ENCODE measurements at regions of chr6 and their contacts with region 1.

Region 1: GRCh38 chr6:125749173-125749864 is at the start of gene HEY2:
- DNase-seq: peak; percentile 63 to 92 (median 69)
- ATAC-seq: peak; percentile 93
- H3K4me3 ChIP-seq: peak within 1 kb of the TSS; percentile 72
- H3K4me3 Mint-ChIP-seq: peak within 1 kb of the TSS; percentile 86 to 99 (median 93)
- H3K27ac ChIP-seq: peak within 1 kb of the TSS; percentile 45
- H3K27ac Mint-ChIP-seq: peak within 1 kb of the TSS in 8 of 9 donors; percentile 41 to 94 (median 68)
- H3K4me1 ChIP-seq: peaks cover 24 to 34% of the 10 kb centered on the region in 2 donors
- H3K4me1 Mint-ChIP-seq: peaks cover 26 to 50% (median 35%) of the 10 kb centered on the region in 7 donors
- H3K27me3 ChIP-seq: peaks cover 14 to 19% of the 10 kb centered on the region in 2 donors
- H3K27me3 Mint-ChIP-seq: peaks cover 19 to 82% (median 55%) of the 10 kb centered on the region in 5 donors
- total RNA-seq, gene HEY2: 0.34 to 0.46 (median 0.46) TPM in 3 of 5 experiments, not detected in the others

Region 2: DNA sequence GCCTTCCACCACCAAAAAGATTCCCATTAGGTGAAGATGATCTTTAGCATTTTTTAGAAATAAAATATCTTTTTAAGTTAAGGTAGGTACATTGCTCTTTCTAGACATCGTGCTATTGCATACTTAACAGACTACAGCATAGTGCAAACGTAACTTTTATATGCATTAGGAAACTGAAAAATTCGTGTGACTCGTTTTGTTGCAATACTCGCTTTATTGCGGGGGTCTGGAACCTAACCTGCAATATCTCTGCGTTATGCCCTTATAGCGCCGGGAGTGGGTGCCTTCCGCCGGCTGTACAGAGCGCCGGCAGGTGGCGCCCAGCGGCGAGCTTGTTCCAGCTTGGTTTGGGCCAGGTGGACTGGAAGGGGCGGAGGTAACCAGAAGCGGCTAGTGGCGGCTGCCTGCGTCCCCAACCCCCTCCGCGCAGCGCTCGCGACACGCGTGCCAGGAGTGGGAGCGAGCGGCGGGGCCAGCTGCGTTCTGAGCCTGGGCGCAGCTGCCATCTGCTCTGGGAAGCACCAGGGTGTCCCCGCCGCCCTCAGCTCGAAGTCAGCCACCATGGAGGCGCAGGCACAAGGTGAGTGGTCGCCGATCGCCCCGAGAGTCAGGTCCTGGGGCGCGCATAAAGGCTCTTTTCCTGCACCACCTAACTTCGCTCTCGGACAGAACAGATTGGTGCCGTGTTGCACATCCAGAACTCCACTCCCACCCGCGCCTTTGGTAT is 595.8 kb before region 1 on chr6 and contains the start of gene TPD52L1:
- CTCF ChIA-PET with region 1: no interaction called
- POLR2A ChIA-PET with region 1: no interaction called
- intact Hi-C with region 1: loop called in 1 of 2 experiments (anchors 5 kb)
- DNase-seq: peak; percentile 23 to 68 (median 35)
- ATAC-seq: peak; percentile 87
- H3K4me3 ChIP-seq: peak within 1 kb of the TSS; percentile 55
- H3K4me3 Mint-ChIP-seq: peak within 1 kb of the TSS; percentile 72 to 87 (median 78)
- H3K27ac ChIP-seq: no peak within 1 kb of the TSS
- H3K27ac Mint-ChIP-seq: no peak within 1 kb of the TSS
- H3K4me1 ChIP-seq: peaks cover 0 to 5% of the 10 kb centered on the region in 2 donors
- H3K4me1 Mint-ChIP-seq: peaks cover 0 to 14% (median 10%) of the 10 kb centered on the region in 7 donors
- H3K27me3 ChIP-seq: peaks cover 0 to 4% of the 10 kb centered on the region in 2 donors
- H3K27me3 Mint-ChIP-seq: peaks cover 24 to 54% (median 45%) of the 10 kb centered on the region in 5 donors
- total RNA-seq, gene TPD52L1: 0.15 TPM in 1 of 5 experiments, not detected in the others

Region 3: DNA sequence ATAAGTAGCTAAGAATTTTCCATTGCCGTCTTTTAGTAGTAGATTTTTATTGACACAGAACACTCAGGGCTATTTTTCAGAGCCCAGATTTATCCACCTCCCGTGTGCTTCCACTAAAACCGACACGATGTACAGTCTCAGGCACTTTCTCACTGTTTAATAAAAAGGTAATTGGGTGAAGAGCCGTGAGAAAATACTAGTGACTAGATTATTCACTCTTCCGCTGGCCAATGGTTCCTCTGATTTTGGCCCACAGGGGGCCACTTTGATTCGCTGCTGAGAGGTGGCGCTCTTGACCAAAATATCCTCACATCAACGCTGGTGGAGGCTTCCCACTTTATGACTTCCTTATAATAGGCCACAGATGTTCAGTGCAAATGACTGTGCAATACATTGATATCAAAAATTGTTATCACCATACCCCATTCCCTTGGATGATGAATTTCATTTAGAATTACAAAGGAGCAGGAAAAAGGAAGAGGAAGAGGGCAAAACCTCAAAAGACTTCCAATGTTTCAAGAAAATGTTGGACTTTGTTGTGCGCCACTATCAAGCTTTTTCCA is 435.2 kb before region 1 on chr6:
- CTCF ChIA-PET with region 1: interaction called, 23 read pairs
- POLR2A ChIA-PET with region 1: interaction called, 3 read pairs
- intact Hi-C with region 1: loop called (anchors 1 kb)
- DNase-seq: peak in 3 of 9 donors; percentile 17 to 27 (median 22)
- ATAC-seq: peak; percentile 76
- H3K4me3 ChIP-seq: no peak overlapping the region
- H3K4me3 Mint-ChIP-seq: no peak overlapping the region
- H3K27ac ChIP-seq: no peak overlapping the region
- H3K27ac Mint-ChIP-seq: no peak overlapping the region
- H3K4me1 ChIP-seq: no peaks in the 10 kb centered on the region
- H3K4me1 Mint-ChIP-seq: peaks cover 0 to 2% (median 0%) of the 10 kb centered on the region in 7 donors
- H3K27me3 ChIP-seq: peaks cover 0 to 6% of the 10 kb centered on the region in 2 donors
- H3K27me3 Mint-ChIP-seq: peaks cover 0 to 22% (median 4%) of the 10 kb centered on the region in 5 donors

Region 4: DNA sequence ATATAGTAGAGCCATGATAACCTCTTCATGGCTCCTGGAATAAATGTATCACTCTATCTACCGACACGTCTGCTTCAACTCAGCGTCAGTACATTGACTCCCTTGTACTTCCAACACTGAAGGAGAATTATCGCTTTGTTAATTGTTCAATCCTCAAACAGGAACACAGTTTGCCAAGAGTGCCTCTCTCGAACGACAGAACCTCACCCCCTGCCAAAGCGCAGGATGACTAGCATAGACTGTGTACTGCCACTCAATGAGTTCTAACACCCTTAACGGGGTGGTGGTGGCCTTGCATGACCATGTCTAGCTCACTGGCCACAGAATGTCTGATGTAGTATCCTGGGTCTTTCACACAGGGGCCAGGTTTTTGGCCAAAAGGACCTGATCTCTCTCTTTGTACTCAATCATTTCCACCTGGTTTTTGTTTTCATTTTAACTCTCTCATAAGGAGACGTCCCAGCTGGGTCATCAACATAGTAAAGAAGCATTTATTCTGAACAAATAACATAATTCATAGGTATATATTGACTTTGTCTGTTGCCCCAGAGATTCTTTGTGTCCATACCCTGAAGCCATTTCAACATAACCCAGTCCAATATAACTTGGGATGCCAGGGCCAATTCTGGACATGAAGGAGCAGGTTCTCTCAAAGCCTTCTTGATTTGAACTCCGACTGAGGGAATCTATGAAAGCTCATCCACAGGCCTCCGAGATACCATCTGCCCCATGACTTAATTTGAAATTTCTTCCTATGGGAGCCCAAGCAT is 81.1 kb before region 1 on chr6:
- CTCF ChIA-PET with region 1: no interaction called
- POLR2A ChIA-PET with region 1: no interaction called
- intact Hi-C with region 1: no loop called
- DNase-seq: no peak
- ATAC-seq: no peak
- H3K4me3 ChIP-seq: no peak overlapping the region
- H3K4me3 Mint-ChIP-seq: no peak overlapping the region
- H3K27ac ChIP-seq: no peak overlapping the region
- H3K27ac Mint-ChIP-seq: no peak overlapping the region
- H3K4me1 ChIP-seq: no peaks in the 10 kb centered on the region
- H3K4me1 Mint-ChIP-seq: no peaks in the 10 kb centered on the region
- H3K27me3 ChIP-seq: no peaks in the 10 kb centered on the region
- H3K27me3 Mint-ChIP-seq: peaks cover 4 to 17% (median 14%) of the 10 kb centered on the region in 5 donors

Region 5: DNA sequence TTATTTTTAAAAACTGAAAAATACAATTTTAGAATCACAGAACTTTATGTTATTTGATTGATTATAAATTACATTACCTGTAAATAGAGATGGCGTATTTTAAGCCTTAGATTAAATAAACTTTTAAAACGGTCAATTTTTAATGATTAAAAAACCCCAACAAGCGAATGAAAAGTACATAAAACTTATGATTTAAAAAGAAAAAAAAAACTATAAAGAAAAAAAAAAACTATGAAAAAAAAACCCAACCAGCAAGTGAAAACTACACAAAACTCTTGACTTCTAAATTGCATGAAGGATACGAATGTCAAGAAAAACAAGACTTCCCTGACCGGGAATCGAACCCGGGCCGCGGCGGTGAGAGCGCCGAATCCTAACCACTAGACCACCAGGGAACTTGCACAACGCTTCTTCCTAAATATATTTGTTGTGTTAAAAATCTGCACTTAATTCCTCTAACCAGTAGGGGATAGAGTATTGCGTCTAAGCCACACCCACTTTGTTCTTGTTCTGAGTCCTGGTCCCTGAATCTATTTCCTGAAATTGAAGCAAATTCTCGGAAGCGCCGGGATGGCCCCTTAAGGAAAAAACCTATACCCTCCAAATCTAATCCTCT is 30.7 kb after region 1 on chr6:
- CTCF ChIA-PET with region 1: interaction called, 6 read pairs
- POLR2A ChIA-PET with region 1: interaction called, 12 read pairs
- intact Hi-C with region 1: loop called (anchors 1 kb)
- DNase-seq: peak; percentile 83 to 96 (median 94)
- ATAC-seq: peak; percentile 89
- H3K4me3 ChIP-seq: peak overlapping the region; percentile 84
- H3K4me3 Mint-ChIP-seq: no peak overlapping the region
- H3K27ac ChIP-seq: peak overlapping the region; percentile 77
- H3K27ac Mint-ChIP-seq: no peak overlapping the region
- H3K4me1 ChIP-seq: peaks cover 4 to 19% of the 10 kb centered on the region in 2 donors
- H3K4me1 Mint-ChIP-seq: peaks cover 5 to 27% (median 22%) of the 10 kb centered on the region in 7 donors
- H3K27me3 ChIP-seq: no peaks in the 10 kb centered on the region
- H3K27me3 Mint-ChIP-seq: peaks cover 0 to 28% (median 0%) of the 10 kb centered on the region in 5 donors

Region 6: DNA sequence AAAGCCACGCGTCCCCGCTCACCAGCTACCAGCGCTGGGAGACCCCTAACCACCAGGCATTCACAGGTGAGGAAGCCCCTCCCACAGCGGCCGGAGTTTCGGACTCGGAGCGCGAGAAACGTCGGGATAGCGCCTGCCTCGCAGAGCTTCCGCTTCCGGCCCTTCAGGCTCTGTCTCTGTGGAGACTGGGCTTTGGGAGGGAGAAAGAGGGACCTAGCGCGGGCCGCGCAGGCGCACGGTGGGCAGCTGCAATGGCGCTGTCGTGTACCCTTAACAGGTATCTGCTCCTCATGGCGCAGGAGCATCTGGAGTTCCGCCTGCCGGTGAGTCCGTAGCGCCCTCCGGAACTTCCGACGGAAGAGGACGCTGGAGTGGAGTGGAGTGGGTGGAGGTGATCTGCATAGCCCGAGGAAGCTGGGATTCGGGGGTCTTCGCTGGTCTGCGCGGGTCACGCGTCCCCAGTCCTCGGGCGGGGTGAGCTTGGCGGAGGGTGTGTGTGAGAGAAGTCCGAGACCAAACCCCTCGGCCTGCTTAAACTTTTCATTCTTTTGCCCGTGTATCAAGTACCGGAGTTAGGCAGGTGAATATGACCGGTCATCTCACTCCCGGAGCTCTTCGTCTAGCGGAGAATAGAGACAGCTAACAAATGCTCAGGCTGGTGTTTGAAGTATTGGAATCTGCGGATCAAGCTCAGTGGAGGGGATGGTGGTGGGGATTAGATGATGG is 237.1 kb after region 1 on chr6 and contains the start of gene TRMT11:
- CTCF ChIA-PET with region 1: interaction called, 3 read pairs
- POLR2A ChIA-PET with region 1: interaction called, 5 read pairs
- intact Hi-C with region 1: loop called in 1 of 2 experiments (anchors 1 kb)
- DNase-seq: peak; percentile 58 to 80 (median 77)
- ATAC-seq: peak; percentile 95
- H3K4me3 ChIP-seq: peak within 1 kb of the TSS; percentile 89
- H3K4me3 Mint-ChIP-seq: peak within 1 kb of the TSS in 4 of 10 donors; percentile 12 to 40 (median 24)
- H3K27ac ChIP-seq: peak within 1 kb of the TSS; percentile 76
- H3K27ac Mint-ChIP-seq: no peak within 1 kb of the TSS
- H3K4me1 ChIP-seq: peaks cover 14 to 21% of the 10 kb centered on the region in 2 donors
- H3K4me1 Mint-ChIP-seq: peaks cover 0 to 19% (median 2%) of the 10 kb centered on the region in 7 donors
- H3K27me3 ChIP-seq: no peaks in the 10 kb centered on the region
- H3K27me3 Mint-ChIP-seq: no peaks in the 10 kb centered on the region
- total RNA-seq, gene TRMT11: 13.6 to 34.1 (median 20.1) TPM

Region 7: GRCh38 chr6:127342946-127343808 is 1593.9 kb after region 1 on chr6 and contains the start of gene ECHDC1:
- CTCF ChIA-PET with region 1: no interaction called
- POLR2A ChIA-PET with region 1: no interaction called
- intact Hi-C with region 1: loop called in 1 of 2 experiments (anchors 5 kb)
- DNase-seq: peak; percentile 45 to 76 (median 70)
- ATAC-seq: peak; percentile 87
- H3K4me3 ChIP-seq: peak within 1 kb of the TSS; percentile 83
- H3K4me3 Mint-ChIP-seq: no peak within 1 kb of the TSS
- H3K27ac ChIP-seq: peak within 1 kb of the TSS; percentile 91
- H3K27ac Mint-ChIP-seq: no peak within 1 kb of the TSS
- H3K4me1 ChIP-seq: peaks cover 34 to 39% of the 10 kb centered on the region in 2 donors
- H3K4me1 Mint-ChIP-seq: peaks cover 0 to 12% (median 9%) of the 10 kb centered on the region in 7 donors
- H3K27me3 ChIP-seq: no peaks in the 10 kb centered on the region
- H3K27me3 Mint-ChIP-seq: no peaks in the 10 kb centered on the region
- total RNA-seq, gene ECHDC1: 18.1 to 46.5 (median 34.3) TPM